ENCODE measurements at regions of chr7 and their contacts with region 1.

Region 1: DNA sequence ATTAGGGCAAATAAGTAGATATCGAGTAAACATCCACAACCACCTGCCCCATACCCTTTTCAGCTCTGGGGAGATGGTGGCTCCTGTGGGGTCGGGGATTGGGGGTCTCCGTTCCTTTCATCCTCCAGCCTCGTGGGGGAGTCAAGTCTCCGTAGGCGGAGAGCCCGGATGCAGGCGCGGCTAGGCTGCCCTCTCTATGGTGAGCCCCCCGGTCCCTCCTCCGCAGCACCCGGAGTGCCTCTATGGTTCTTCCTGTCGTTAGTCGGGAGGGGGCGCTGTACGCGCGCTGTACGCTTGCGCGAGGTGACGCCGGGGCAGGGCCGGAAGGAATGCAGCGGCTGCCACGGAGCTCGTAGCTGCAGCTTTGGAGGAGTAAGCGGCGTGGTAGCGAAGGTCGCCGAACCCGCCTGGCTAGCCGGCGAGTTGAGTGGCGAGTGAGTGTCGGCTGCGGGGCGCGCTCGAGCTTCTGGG is 14.8 kb upstream of the MMD2 start:
- DNase-seq: peak; percentile 91
- CTCF ChIP-seq: peak; percentile 91

Region 2: GRCh38 chr7:4849369-4849768 is 124.4 kb before region 1 on chr7:
- in situ Hi-C with region 1: no loop called
- DNase-seq: peak; percentile 58
- CTCF ChIP-seq: peak; percentile 38

Region 3: DNA sequence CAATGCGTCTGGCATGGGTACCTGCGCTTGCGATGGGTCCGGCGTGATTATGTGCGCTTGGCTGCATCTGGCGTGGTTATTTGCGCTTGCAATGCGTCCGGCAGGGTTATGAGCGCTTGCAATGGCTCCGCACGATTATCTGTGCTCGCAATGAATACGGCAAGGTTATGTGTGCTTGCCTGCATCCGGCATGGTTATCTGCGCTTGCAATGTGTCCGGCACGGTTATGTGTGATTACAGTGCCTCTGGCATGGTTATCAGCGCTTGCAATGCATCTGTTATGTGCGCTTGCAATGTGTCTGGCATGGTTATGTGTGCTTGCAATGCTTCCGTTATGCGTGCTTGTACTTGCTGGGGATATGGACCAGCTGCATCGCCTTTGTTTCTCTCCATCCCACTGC is 109.5 kb after region 1 on chr7:
- in situ Hi-C with region 1: loop called (anchors 10 kb)
- DNase-seq: no peak
- CTCF ChIP-seq: no peak

Region 4: GRCh38 chr7:5183145-5183544 is 209.4 kb after region 1 on chr7:
- in situ Hi-C with region 1: no loop called
- DNase-seq: no peak
- CTCF ChIP-seq: no peak

Region 5: DNA sequence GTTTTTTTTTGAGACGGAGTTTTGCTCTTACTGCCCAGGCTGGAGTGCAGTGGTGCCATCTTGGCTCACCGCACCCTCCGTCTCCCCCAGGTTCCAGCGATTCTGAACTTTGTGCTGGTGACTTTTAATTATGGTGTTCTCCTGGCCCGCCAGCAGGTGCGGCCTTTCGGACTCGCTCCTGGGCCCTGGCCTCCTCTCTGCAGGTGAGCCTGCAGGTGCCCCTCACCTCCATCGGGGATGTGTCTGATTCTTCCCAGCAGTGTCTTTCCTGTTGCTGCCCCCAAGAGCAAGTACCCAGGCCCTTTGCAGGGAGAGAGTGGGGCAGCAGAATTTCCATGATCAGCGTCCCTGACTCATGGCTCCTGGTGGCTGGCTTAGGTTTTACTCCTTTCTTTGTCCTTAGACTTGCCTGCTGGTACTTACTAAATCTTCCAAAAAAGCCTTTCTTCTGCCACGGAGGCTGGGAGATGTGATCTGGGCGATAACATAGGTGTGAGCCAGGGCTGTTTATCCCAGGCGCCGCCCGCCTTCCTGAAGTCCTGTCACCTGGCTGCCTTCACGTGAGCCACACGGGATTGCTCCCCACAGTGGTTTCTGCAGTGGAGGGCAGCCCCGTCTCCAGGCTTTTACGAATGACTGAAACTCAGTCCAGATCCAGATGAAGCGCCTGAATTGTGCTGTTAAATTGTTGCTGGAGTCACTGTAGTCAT is 227.0 kb after region 1 on chr7:
- in situ Hi-C with region 1: no loop called
- DNase-seq: no peak
- CTCF ChIP-seq: no peak

Region 6: GRCh38 chr7:5596046-5596895 is 622.5 kb after region 1 on chr7:
- in situ Hi-C with region 1: no loop called
- DNase-seq: peak; percentile 85
- CTCF ChIP-seq: no peak